Psoas muscle (tissue), 8 donors: ENCODE measurements at regions of chr13 and their contacts with region 1.

Region 1: DNA sequence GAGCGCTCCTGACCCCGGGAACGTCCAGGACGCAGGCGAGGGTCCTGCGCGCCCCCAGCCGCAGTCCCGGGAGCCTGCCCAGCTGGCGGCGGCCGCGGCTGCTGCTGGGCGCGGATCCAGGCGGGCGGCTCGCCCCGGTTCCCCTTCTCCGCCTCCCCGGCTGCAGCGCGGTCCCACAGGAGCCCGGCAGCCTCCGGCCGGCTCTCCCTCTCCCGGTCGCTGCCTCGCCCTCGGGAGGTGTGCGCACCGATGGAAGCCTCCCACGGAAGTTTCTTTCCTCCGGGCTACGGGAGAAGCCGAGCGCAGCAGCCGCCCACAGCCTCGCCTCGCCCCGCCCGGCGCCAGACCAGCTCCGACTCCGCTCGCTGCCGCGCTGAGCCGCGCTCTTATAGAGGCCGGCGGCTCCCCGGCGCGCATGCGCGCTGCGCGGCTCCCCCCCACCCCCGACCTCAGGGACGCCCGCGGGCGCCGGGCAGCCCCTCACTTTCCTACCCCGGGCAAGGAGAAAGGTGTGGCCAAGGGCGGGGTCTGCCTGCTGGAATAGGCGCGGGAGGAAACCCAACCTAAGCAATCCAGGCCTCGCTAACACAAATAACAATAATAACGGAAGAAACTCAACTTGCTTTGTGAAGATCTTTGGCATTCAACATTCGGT is at the start of gene SHISA2:
- DNase-seq: peak; percentile 37 to 64
- ATAC-seq: peak; percentile 74 to 80 (median 76)
- H3K4me3 ChIP-seq: peak within 1 kb of the TSS; percentile 73
- H3K27ac ChIP-seq: peak within 1 kb of the TSS; percentile 82
- H3K4me1 ChIP-seq: peaks cover 6% of the 10 kb centered on the region
- H3K27me3 ChIP-seq: peaks cover 0 to 14% (median 0%) of the 10 kb centered on the region in 3 donors
- CTCF ChIP-seq: no peak
- total RNA-seq, gene SHISA2: 3.2 to 9.4 (median 5.2) TPM

Region 2: DNA sequence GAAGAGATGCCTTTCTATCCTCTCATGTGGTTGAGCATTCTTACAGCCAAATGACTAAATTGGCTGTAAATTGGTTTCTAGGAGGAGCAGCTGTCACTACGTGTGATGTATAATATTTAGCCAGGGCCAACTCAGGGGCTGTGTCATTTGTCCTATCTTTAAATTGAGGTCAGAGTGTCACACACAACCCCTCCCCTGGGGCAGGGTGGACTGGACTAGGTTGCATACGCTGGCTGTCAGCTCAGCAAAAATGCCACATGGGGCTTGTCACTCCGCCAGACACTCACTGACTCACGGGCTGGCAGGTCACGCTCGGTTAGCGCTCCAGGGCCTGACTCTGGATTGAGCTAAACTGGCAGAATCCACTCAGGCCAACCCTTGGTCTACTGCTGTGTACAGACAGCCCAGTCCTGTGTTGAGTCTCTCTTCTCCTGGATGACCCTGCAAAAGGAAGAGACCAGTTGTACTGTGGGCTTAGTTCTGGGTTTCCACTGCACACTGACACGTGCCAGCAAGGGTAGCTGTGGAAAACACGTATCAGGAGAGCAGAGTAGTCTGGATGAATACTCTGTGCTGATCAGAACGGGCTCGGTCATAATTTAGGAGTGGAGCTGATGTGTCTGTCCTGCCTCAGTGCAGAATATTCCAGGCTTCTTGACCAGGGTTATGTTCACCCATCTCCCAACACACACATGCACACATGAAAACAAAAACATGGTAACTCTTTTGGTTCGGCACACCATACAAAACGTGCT is 29.1 kb before region 1 on chr13:
- intact Hi-C with region 1: loop called in 1 of 2 experiments (anchors 2 kb)
- DNase-seq: peak; percentile 86 to 94
- ATAC-seq: peak; percentile 94 to 98 (median 96)
- H3K4me3 ChIP-seq: no peak overlapping the region
- H3K27ac ChIP-seq: peak overlapping the region; percentile 84
- H3K4me1 ChIP-seq: peaks cover 30% of the 10 kb centered on the region
- H3K27me3 ChIP-seq: no peaks in the 10 kb centered on the region
- CTCF ChIP-seq: no peak